Activated CD4-positive, alpha-beta T cell treated with anti-CD3 and anti-CD28 coated beads for 36 hours (primary cell): ENCODE measurements at regions of chr4 and their contacts with region 1.

Region 1: GRCh38 chr4:151099229-151099975 is at the start of gene RPS3A:
- DNase-seq: peak; percentile 98
- ATAC-seq: peak; percentile 86
- H3K4me3 Mint-ChIP-seq: peak within 1 kb of the TSS; percentile 89
- H3K27ac Mint-ChIP-seq: peak within 1 kb of the TSS; percentile 100
- H3K4me1 Mint-ChIP-seq: peaks cover 42% of the 10 kb centered on the region
- H3K27me3 Mint-ChIP-seq: no peaks in the 10 kb centered on the region
- total RNA-seq, gene RPS3A: 2,077 to 2,995 TPM

Region 2: DNA sequence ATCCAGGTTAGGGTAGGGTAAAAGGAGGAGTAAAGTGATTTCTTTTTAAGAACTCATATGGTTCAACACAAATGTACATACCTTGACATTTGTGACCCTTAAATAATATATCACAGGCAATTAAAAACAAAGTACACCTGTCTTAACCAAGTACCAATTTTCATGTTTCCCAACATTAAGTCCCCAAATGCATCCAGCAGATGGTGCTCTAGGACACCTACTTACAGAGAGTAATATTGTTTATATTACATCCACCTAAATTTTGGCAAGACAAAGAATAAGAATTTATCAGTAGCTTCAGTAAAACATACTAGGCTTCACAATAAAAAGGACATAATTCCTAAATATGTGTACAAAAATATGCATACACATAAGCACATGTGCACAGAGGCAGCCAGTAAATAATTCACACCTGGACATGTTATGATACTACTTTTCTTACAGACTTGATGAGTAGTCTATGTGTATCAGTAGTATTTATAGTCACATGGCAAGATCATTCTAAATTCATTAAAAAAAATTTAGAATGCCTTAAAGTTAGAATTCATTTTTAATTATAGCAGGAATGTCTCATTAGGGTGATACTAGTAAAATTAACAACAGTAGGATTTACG is 801.4 kb before region 1 on chr4:
- CTCF ChIA-PET with region 1: no interaction called
- POLR2A ChIA-PET with region 1: no interaction called
- intact Hi-C with region 1: loop called in 1 of 2 experiments (anchors 5 kb)
- DNase-seq: peak; percentile 60
- ATAC-seq: no peak
- H3K4me3 Mint-ChIP-seq: no peak overlapping the region
- H3K27ac Mint-ChIP-seq: no peak overlapping the region
- H3K4me1 Mint-ChIP-seq: peaks cover 15% of the 10 kb centered on the region
- H3K27me3 Mint-ChIP-seq: no peaks in the 10 kb centered on the region

Region 3: GRCh38 chr4:150886599-150886998 is 212.8 kb before region 1 on chr4:
- CTCF ChIA-PET with region 1: no interaction called
- POLR2A ChIA-PET with region 1: no interaction called
- intact Hi-C with region 1: loop called in 1 of 2 experiments (anchors 5 kb)
- DNase-seq: no peak
- ATAC-seq: no peak
- H3K4me3 Mint-ChIP-seq: no peak overlapping the region
- H3K27ac Mint-ChIP-seq: no peak overlapping the region
- H3K4me1 Mint-ChIP-seq: peaks cover 31% of the 10 kb centered on the region
- H3K27me3 Mint-ChIP-seq: no peaks in the 10 kb centered on the region

Region 4: DNA sequence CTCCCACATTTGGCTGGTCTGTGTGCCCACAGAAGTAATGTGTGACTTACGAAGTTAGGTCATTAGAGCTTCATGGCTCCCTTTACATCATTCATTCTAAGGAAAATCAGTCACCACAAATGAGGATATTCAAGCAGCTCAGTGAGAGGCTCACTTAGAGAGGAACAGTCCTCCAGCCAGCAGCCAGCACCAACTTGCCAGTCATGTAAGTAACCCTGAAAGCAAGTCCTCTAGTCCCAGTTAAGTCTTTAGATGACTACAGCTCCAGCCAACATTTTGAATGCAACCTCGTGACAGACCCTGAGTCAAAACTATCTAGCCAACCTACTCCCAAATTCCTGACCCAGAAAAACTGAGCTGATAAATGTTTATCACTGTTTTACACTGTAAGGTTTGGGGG is 155.6 kb before region 1 on chr4:
- CTCF ChIA-PET with region 1: interaction called, 6 read pairs
- POLR2A ChIA-PET with region 1: interaction called, 10 read pairs
- intact Hi-C with region 1: no loop called
- DNase-seq: peak; percentile 50
- ATAC-seq: peak; percentile 85
- H3K4me3 Mint-ChIP-seq: no peak overlapping the region
- H3K27ac Mint-ChIP-seq: peak overlapping the region; percentile 13
- H3K4me1 Mint-ChIP-seq: peaks cover 61% of the 10 kb centered on the region
- H3K27me3 Mint-ChIP-seq: no peaks in the 10 kb centered on the region

Region 5: DNA sequence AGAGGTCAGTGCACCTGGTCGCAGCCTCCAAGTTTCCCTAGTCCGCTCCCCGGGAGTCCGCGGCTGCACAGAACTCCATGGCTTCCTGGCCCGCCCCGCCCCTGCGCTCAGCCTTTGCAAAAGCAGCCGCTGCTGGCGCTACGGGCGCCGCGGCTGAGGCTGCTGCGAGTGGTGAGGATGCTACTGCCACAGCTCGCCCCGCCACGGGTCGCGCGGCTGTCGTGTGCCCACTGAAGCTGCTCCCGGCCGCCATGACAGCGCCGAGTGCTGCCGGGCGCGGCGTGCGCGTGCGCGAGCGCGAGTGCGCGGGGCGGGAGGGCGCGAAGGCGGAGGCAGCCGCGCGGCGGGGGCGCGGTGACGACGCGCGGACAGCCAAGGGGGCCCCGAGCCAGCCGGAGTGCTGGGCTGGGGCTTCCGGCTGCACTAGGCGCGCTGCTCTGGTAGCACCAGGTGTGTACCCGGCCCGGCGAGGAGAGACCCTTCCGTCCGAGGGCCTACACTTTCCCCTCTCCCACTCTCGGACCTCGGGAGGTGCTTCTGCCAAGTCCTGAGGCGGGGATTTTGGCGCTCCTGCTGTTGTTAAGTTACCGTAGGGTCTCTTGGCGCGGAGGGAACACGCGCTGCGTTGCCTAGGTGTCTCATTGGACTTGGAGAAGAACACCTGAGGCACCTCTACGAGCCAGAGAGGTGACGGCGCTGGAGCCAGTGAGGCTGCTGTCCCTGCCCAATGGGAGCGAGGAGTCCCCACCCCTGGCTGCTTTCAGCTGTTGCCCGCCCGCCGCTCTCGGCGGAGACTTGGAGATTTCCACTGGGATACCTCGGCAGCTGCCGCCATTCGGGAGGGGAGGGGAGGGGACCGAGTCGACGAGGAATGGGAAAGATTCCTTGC is 83.7 kb before region 1 on chr4:
- CTCF ChIA-PET with region 1: interaction called, 3 read pairs
- POLR2A ChIA-PET with region 1: interaction called, 8 read pairs
- intact Hi-C with region 1: loop called (anchors 1 kb)
- DNase-seq: peak; percentile 89
- ATAC-seq: peak; percentile 81
- H3K4me3 Mint-ChIP-seq: peak overlapping the region; percentile 90
- H3K27ac Mint-ChIP-seq: peak overlapping the region; percentile 99
- H3K4me1 Mint-ChIP-seq: peaks cover 24% of the 10 kb centered on the region
- H3K27me3 Mint-ChIP-seq: no peaks in the 10 kb centered on the region

Region 6: GRCh38 chr4:151117371-151117962 is 18.1 kb after region 1 on chr4:
- CTCF ChIA-PET with region 1: interaction called, 13 read pairs
- POLR2A ChIA-PET with region 1: interaction called, 15 read pairs
- intact Hi-C with region 1: no loop called
- DNase-seq: peak; percentile 74
- ATAC-seq: peak; percentile 72
- H3K4me3 Mint-ChIP-seq: no peak overlapping the region
- H3K27ac Mint-ChIP-seq: no peak overlapping the region
- H3K4me1 Mint-ChIP-seq: peaks cover 8% of the 10 kb centered on the region
- H3K27me3 Mint-ChIP-seq: no peaks in the 10 kb centered on the region

Region 7: GRCh38 chr4:151376540-151376939 is 277.1 kb after region 1 on chr4:
- CTCF ChIA-PET with region 1: no interaction called
- POLR2A ChIA-PET with region 1: no interaction called
- intact Hi-C with region 1: no loop called
- DNase-seq: no peak
- ATAC-seq: no peak
- H3K4me3 Mint-ChIP-seq: no peak overlapping the region
- H3K27ac Mint-ChIP-seq: no peak overlapping the region
- H3K4me1 Mint-ChIP-seq: no peaks in the 10 kb centered on the region
- H3K27me3 Mint-ChIP-seq: peaks cover 11% of the 10 kb centered on the region

Region 8: GRCh38 chr4:151429957-151430570 is 330.7 kb after region 1 on chr4:
- CTCF ChIA-PET with region 1: no interaction called
- POLR2A ChIA-PET with region 1: no interaction called
- intact Hi-C with region 1: no loop called
- DNase-seq: no peak
- ATAC-seq: peak; percentile 23
- H3K4me3 Mint-ChIP-seq: no peak overlapping the region
- H3K27ac Mint-ChIP-seq: no peak overlapping the region
- H3K4me1 Mint-ChIP-seq: peaks cover 4% of the 10 kb centered on the region
- H3K27me3 Mint-ChIP-seq: peaks cover 10% of the 10 kb centered on the region

Region 9: GRCh38 chr4:151760712-151761527 is 661.5 kb after region 1 on chr4 and contains the start of gene GATB:
- CTCF ChIA-PET with region 1: no interaction called
- POLR2A ChIA-PET with region 1: no interaction called
- intact Hi-C with region 1: loop called in 1 of 2 experiments (anchors 1 kb)
- DNase-seq: peak; percentile 95
- ATAC-seq: peak; percentile 100
- H3K4me3 Mint-ChIP-seq: peak within 1 kb of the TSS; percentile 100
- H3K27ac Mint-ChIP-seq: peak within 1 kb of the TSS; percentile 99
- H3K4me1 Mint-ChIP-seq: peaks cover 18% of the 10 kb centered on the region
- H3K27me3 Mint-ChIP-seq: no peaks in the 10 kb centered on the region
- total RNA-seq, gene GATB: 21.2 to 25.6 TPM